ENCODE measurements at regions of chr2 and their contacts with region 1.

Region 1: DNA sequence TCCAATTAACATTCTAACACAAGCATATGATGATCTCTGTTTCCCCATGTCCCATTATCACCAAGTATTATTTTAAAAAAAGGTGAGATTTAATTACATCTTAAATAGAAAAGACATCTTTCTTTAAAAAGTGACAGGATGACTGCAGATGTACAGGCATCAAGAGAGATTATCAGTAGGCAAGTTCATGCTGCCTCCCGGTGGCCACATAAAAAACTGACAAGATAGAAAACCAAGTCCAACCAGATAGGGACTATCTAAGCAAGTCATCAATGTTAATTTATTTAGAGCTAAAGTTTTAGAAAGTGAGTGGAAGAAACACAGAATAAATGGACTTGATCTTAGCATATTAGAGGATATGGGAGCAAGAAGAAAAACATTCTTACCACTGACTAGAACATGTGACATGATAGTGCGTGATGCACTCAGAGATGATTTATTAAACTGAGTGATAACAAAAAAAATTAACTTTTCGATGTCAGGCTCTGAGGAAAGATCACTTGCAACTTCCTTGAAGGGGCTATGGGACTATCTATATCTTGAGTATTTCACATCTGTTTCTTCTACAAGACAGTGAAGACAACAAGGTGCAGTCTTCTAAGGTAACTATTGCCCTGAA is 5.4 kb upstream of the TDRD15 start:
- DNase-seq: no peak
- ATAC-seq: peak in 1 of 4 donors; percentile 36
- H3K4me3 ChIP-seq: no peak overlapping the region
- H3K27ac ChIP-seq: no peak overlapping the region
- H3K4me1 ChIP-seq: no peaks in the 10 kb centered on the region
- H3K27me3 ChIP-seq: peaks cover 0 to 10% (median 0%) of the 10 kb centered on the region in 9 donors
- CTCF ChIP-seq: peak; percentile 36 to 59 (median 46)
- POLR2A ChIP-seq: no peak

Region 2: GRCh38 chr2:20666304-20667150 is 451.9 kb before region 1 on chr2 and contains the start of gene GDF7:
- intact Hi-C with region 1: loop called in 8 of 10 experiments (anchors 5 to 10 kb)
- DNase-seq: peak in 3 of 5 donors; percentile 55 to 63 (median 62)
- ATAC-seq: peak in 3 of 4 donors; percentile 35 to 69 (median 49)
- H3K4me3 ChIP-seq: peak within 1 kb of the TSS; percentile 26 to 65 (median 50)
- H3K27ac ChIP-seq: peak within 1 kb of the TSS in 6 of 12 donors; percentile 17 to 52 (median 36)
- H3K4me1 ChIP-seq: peaks cover 0 to 41% (median 15%) of the 10 kb centered on the region in 12 donors
- H3K27me3 ChIP-seq: peaks cover 39 to 96% (median 83%) of the 10 kb centered on the region in 9 donors
- CTCF ChIP-seq: peak in 9 of 12 donors; percentile 13 to 53 (median 32)
- POLR2A ChIP-seq: no peak
- total RNA-seq, gene GDF7: 0.14 to 1.6 (median 0.56) TPM

Region 3: GRCh38 chr2:21042958-21043743 is 75.3 kb before region 1 on chr2:
- intact Hi-C with region 1: loop called (anchors 1 to 5 kb)
- DNase-seq: peak; percentile 41 to 78 (median 65)
- ATAC-seq: peak; percentile 60 to 66 (median 62)
- H3K4me3 ChIP-seq: peak overlapping the region in 9 of 12 donors; percentile 10 to 46 (median 33)
- H3K27ac ChIP-seq: peak overlapping the region in 9 of 12 donors; percentile 19 to 84 (median 51)
- H3K4me1 ChIP-seq: peaks cover 0 to 21% (median 6%) of the 10 kb centered on the region in 12 donors
- H3K27me3 ChIP-seq: peaks cover 0 to 17% (median 0%) of the 10 kb centered on the region in 9 donors
- CTCF ChIP-seq: peak; percentile 97 to 100 (median 99)
- POLR2A ChIP-seq: no peak

Region 4: DNA sequence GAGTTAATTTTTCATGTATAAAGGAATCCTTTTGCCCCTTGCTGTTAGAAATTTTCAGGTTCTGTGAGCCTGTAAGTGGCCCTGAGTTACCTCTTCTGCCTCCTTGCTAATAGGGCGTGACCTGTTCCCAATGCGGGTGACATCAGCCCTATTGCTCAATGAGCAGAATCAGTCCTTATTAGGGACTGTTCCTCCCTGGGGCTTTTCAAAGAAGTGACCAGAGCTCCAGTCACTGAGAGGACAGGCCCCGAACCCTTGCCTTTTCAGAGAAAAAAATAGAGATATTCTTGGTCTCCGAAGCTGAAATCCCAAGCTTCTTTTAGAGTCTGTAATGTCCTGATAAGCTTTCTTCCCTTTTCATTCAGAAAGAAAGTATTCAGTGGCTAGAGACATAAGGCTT is 66.4 kb before region 1 on chr2:
- intact Hi-C with region 1: loop called in 1 of 10 experiments (anchors 2 kb)
- DNase-seq: no peak
- ATAC-seq: peak in 2 of 4 donors; percentile 39 to 69
- H3K4me3 ChIP-seq: no peak overlapping the region
- H3K27ac ChIP-seq: no peak overlapping the region
- H3K4me1 ChIP-seq: no peaks in the 10 kb centered on the region
- H3K27me3 ChIP-seq: peaks cover 0 to 5% (median 0%) of the 10 kb centered on the region in 9 donors
- CTCF ChIP-seq: no peak
- POLR2A ChIP-seq: no peak